Right cardiac atrium (tissue), 5 donors: ENCODE measurements at regions of chr1 and their contacts with region 1.

Region 1: DNA sequence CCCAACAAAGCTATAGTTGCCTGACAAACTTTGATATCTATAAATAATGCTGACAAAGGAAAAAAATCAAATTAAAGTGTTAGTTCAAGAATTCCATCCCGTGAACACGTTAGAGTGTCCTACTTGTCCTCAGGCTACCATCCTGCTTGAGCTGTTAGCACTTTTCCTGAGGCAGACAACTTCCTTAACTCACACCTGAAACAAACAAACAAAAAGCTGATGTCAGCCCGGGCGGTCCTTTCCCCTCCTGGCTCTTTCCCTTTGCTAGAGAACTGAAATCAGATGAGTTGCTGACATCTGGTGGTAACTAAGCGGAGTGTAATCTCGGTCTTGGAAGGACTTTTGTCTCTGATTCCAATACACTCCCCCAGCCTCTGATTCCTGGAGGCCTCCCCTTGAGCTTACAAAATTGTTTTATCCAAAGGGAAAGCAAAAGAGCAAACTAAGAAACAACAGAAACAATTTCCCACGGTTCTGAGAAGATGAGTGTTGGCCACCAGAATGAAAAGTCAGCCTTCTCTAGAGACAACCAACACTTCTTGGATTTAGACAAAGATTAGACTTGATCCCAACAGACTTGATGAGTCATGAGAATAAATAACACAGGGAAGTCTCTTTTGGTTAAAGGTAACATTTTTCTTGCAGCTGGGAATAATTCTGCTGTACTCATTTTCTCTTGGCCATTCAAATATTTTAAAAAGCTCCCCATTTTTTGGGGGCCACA is 135.4 kb downstream of the PROX1 start:
- DNase-seq: peak in 1 of 3 donors; percentile 22
- ATAC-seq: peak; percentile 84 to 92
- H3K4me3 ChIP-seq: no peak overlapping the region
- H3K27ac ChIP-seq: no peak overlapping the region
- H3K4me1 ChIP-seq: no peaks in the 10 kb centered on the region
- H3K27me3 ChIP-seq: no peaks in the 10 kb centered on the region

Region 2: GRCh38 chr1:213122514-213122929 is 1000.7 kb before region 1 on chr1:
- intact Hi-C with region 1: loop called in 1 of 4 experiments (anchors 10 kb)
- DNase-seq: no peak
- ATAC-seq: no peak
- H3K4me3 ChIP-seq: no peak overlapping the region
- H3K27ac ChIP-seq: no peak overlapping the region
- H3K4me1 ChIP-seq: no peaks in the 10 kb centered on the region
- H3K27me3 ChIP-seq: no peaks in the 10 kb centered on the region

Region 3: GRCh38 chr1:213244664-213245091 is 878.5 kb before region 1 on chr1:
- intact Hi-C with region 1: loop called in 2 of 4 experiments (anchors 10 kb)
- DNase-seq: no peak
- ATAC-seq: no peak
- H3K4me3 ChIP-seq: no peak overlapping the region
- H3K27ac ChIP-seq: no peak overlapping the region
- H3K4me1 ChIP-seq: no peaks in the 10 kb centered on the region
- H3K27me3 ChIP-seq: no peaks in the 10 kb centered on the region

Region 4: GRCh38 chr1:213374369-213374768 is 748.9 kb before region 1 on chr1:
- intact Hi-C with region 1: loop called (anchors 5 to 10 kb)
- DNase-seq: peak; percentile 46 to 79 (median 68)
- ATAC-seq: peak; percentile 64 to 66
- H3K4me3 ChIP-seq: no peak overlapping the region
- H3K27ac ChIP-seq: no peak overlapping the region
- H3K4me1 ChIP-seq: no peaks in the 10 kb centered on the region
- H3K27me3 ChIP-seq: no peaks in the 10 kb centered on the region

Region 5: GRCh38 chr1:214102907-214103306 is 20.3 kb before region 1 on chr1:
- intact Hi-C with region 1: no loop called
- DNase-seq: no peak
- ATAC-seq: no peak
- H3K4me3 ChIP-seq: no peak overlapping the region
- H3K27ac ChIP-seq: no peak overlapping the region
- H3K4me1 ChIP-seq: no peaks in the 10 kb centered on the region
- H3K27me3 ChIP-seq: no peaks in the 10 kb centered on the region

Region 6: DNA sequence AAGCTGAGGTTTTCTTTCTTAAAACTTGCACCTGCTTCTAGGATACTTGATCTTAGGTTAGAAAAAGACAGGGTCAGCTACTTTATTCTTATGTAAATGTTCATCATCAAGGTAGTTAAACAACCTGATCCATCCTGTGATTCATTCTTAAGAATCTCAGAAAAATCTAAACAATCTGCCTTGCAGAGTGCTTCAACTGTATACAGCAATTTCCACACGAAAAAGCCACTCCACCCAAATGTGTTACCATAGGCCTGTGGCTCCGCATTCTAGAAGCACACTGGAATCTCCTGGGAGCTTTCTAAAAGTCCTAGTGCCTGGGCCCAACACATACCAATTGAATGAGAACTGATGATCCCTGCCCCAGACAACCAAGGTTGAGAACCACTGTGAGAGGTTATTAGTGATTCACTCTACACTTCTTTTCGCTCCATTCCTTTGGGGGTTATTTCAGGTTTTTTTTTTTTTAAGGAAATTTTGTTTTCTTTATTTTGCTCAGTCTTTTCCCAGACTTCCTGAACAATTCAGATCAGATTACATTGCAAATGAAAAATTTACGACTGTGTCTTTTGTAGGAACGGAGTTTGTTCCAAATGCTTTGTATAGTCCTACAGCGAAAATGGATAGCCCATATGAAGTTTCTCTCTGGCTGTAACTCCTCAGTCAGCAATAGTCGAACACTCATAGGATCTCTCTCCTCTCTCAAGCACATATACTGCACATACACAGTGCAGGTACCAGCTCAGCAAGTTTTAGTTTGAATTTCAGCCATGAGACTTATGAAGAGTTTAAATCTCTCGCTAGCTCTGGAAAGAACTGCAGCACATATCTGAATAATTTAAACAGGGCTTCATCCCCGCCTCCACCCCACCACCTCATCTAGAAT is 173.9 kb after region 1 on chr1:
- intact Hi-C with region 1: no loop called
- DNase-seq: no peak
- ATAC-seq: no peak
- H3K4me3 ChIP-seq: no peak overlapping the region
- H3K27ac ChIP-seq: no peak overlapping the region
- H3K4me1 ChIP-seq: no peaks in the 10 kb centered on the region
- H3K27me3 ChIP-seq: no peaks in the 10 kb centered on the region

Region 7: DNA sequence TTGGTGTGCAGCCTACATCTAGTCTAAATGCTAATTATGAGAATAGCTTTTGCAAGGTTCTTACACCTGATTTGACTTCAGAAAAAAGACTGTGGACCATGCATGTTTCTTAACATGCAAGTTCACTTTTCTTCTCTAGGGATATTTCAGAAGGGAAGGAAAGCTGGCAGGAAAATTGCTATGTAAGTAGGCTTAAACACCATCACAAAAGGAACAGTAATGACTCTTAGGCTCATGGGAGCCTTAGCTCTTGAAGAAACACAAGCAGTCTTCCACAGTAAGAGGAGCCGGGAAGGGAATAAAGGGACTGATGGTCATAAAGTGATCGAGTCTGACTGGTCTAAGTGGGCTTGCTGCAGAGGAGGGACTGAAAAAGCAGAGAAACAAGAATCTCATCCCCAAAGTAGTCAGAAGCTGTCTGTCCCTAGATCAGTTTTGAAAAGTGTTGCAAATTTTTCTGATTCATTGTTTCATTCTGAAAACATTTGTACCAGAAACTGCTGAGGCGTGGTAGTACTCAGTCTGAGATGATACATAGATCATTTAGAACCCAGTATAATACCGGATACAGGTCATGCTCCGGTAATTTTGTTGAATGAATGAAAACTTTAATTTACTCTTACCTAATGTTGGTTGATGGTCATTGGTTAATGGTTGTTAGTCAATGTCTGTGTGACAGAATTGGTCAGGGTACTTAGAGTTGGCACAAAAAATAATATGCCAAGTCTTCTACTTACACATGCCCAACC is 198.7 kb after region 1 on chr1:
- intact Hi-C with region 1: no loop called
- DNase-seq: no peak
- ATAC-seq: no peak
- H3K4me3 ChIP-seq: no peak overlapping the region
- H3K27ac ChIP-seq: no peak overlapping the region
- H3K4me1 ChIP-seq: no peaks in the 10 kb centered on the region
- H3K27me3 ChIP-seq: no peaks in the 10 kb centered on the region